Common myeloid progenitor, CD34-positive (primary cell): ENCODE measurements at regions of chr6 and their contacts with region 1.

Region 1: DNA sequence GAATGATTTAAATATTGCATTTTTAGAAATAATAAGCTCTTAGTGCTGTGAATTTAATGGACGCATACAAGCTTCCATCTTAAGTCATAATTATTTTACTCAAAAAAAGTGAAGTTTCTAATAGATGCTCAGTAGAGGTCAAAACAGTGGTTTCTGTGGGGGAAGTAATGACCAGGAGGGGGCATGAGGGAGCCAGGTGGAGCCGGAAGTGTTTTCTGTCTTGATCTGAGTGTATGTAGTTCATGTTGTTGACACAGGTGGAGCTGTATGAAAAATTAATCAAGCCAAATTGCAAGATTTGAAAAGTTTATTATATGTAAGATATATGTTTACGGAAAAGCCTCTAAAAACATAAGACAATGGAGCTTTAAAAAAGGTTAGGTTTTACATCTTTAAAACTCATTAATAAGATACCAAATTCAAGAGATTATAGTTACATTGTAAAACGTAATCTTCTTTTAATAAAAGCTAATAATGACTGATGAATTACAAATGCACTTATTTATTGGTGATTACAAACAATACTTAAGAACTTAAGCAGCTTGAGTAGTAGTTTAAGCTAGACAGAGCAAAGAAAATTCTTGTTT is 68.0 kb downstream of the PLAGL1 start:
- DNase-seq: peak; percentile 78 to 87 (median 86)
- H3K4me3 ChIP-seq: no peak overlapping the region
- H3K27ac ChIP-seq: no peak overlapping the region
- H3K4me1 ChIP-seq: peaks cover 0 to 14% (median 2%) of the 10 kb centered on the region in 4 experiments
- H3K27me3 ChIP-seq: no peaks in the 10 kb centered on the region

Region 2: GRCh38 chr6:143575440-143575839 is 364.7 kb before region 1 on chr6:
- CTCF ChIA-PET with region 1: interaction called, 75 read pairs
- POLR2A ChIA-PET with region 1: no interaction called
- DNase-seq: peak; percentile 82 to 90 (median 89)
- H3K4me3 ChIP-seq: no peak overlapping the region
- H3K27ac ChIP-seq: no peak overlapping the region
- H3K4me1 ChIP-seq: no peaks in the 10 kb centered on the region
- H3K27me3 ChIP-seq: no peaks in the 10 kb centered on the region

Region 3: DNA sequence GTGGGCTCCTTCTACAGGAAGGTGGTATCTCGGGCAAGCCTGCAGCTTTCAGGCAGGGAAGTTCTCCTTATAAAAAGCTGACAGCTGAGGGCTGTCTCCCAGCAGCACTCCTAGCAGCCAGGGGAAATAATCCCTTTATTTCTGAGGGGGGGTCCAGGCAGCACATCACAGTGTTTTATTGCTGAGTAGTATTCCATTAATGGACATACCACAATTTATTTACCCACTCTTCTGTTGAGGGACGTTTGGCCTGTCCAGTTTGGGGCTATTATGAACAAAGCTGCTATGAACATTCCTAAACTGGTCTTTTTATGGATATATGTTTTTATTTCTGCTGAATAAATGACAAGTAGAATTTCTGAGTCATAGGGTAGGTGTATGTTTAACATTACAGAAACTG is 282.3 kb before region 1 on chr6:
- CTCF ChIA-PET with region 1: no interaction called
- POLR2A ChIA-PET with region 1: no interaction called
- DNase-seq: no peak
- H3K4me3 ChIP-seq: no peak overlapping the region
- H3K27ac ChIP-seq: no peak overlapping the region
- H3K4me1 ChIP-seq: no peaks in the 10 kb centered on the region
- H3K27me3 ChIP-seq: no peaks in the 10 kb centered on the region

Region 4: DNA sequence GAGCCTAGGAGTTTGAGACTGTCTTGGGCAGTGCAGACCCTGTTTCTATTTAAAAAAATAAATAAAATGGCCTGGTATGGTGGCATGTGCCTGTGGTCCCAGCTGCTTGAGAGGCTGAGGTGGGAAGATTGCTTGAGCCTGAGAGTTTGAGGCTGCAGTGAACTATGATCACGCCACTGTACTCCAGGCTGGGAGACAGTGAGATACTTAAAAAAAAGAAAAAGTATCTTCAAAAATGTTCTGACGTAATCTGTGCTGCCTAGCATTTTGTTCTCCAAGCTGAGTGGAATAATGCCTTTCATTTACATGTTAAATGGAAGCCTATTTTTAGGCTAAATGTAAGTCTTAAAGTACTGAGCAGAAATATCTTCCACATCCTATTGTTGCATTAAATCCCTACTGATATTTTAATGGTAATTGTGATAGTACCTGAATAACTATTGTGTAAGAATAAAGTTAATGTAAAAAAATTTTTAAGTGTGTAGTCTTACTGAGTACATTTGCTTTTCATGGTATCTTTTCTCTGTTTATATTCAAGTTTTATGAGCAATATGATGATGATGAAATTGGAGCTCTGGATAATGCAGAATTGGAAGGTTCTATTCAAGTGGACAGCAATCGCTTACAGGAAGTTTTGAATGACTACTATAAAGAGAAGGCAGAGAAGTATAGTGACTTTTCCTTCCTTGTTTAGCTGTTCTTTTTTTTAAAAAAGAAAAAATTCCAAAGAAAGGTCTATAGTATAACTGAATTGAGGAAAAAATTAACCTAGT is 80.0 kb before region 1 on chr6:
- CTCF ChIA-PET with region 1: no interaction called
- POLR2A ChIA-PET with region 1: no interaction called
- DNase-seq: no peak
- H3K4me3 ChIP-seq: no peak overlapping the region
- H3K27ac ChIP-seq: no peak overlapping the region
- H3K4me1 ChIP-seq: no peaks in the 10 kb centered on the region
- H3K27me3 ChIP-seq: no peaks in the 10 kb centered on the region

Region 5: GRCh38 chr6:143952947-143953701 is 13.0 kb after region 1 on chr6:
- CTCF ChIA-PET with region 1: interaction called, 19 read pairs
- POLR2A ChIA-PET with region 1: no interaction called
- DNase-seq: no peak
- H3K4me3 ChIP-seq: no peak overlapping the region
- H3K27ac ChIP-seq: no peak overlapping the region
- H3K4me1 ChIP-seq: no peaks in the 10 kb centered on the region
- H3K27me3 ChIP-seq: no peaks in the 10 kb centered on the region

Region 6: DNA sequence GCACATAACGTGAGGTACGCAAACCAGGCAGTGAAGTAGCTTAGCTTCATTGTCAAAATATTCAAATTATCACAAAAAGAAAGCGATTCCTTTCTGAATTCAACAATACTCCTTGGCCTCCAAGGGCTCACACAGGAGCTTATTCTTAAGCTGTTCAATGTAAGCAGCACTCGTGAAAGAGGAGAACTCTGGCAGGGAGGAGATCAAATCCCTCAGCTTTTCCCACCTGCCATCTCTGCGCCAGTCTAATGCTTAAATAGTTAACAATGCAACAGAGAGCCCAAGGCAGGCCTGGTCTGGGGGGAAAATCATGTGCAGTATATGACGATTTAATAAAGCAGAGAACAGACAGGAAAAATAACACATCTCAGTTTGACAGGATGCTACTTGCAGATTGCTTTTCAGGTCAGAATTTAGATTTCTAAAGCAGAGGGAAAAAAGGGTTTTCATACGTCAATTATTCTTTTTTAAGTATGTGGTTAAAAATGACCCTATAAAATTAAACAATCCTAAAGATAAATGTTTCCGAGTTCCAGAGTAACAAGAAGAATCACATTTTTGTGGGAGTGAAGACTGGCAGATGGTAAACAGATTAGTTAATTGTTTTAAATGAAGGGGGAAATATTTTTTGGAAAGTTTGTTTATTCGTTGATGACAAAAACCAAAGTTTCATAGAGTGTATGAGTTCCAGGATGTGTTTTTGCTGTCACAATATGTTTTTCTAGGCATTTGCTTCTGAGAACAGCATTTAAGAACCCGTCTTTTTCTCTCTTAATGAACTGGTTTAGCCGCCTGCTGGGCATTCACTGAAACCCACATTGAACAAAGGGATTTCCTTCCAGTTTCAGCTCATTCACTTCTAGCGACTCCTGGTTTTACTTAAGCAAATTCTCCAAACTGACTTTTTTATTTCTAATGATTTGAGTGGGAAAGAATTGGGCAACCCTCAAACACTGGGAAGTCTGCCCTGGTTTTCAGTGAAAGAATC is 22.1 kb after region 1 on chr6:
- CTCF ChIA-PET with region 1: interaction called, 16 read pairs
- POLR2A ChIA-PET with region 1: no interaction called
- DNase-seq: no peak
- H3K4me3 ChIP-seq: no peak overlapping the region
- H3K27ac ChIP-seq: no peak overlapping the region
- H3K4me1 ChIP-seq: peaks cover 0 to 32% (median 11%) of the 10 kb centered on the region in 4 experiments
- H3K27me3 ChIP-seq: no peaks in the 10 kb centered on the region

Region 7: DNA sequence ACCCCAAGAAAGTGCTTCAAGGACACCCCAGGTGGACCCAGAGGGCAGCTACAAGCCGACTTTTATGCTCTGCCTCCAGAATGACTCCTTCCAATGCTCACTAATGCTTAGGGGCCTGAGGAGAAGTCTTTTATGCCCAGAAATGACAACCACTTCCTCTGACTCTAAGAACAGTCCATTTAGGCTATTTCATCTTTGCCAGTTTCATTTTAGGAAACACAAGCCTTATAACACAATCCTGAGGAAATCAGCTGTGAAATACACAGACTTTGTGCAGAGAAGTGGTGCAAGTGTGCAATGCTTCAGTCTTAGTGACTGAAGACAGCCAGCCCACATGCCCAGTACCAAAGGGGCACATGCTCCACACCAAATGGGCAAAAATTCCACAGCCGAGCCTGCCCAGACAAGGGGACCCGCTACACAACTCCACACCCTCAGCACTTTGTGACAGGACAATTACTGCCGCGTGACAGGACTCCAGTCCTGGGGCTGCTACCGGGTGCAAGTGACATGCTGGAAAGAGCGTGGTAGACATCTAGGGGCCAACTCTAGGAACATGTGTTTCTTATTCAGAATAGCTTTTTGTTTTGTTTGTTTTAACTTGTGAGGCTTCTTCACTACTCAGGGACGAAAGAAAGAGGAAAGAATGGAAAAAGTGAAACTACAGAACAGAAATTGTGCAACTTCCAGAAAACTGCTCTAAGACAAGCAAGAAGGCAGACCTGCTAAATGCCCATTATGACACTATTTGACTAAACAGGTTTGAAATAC is 96.1 kb after region 1 on chr6:
- CTCF ChIA-PET with region 1: interaction called, 12 read pairs
- POLR2A ChIA-PET with region 1: no interaction called
- DNase-seq: peak; percentile 49 to 77 (median 72)
- H3K4me3 ChIP-seq: peak overlapping the region in 6 of 7 experiments; percentile 24 to 75 (median 64)
- H3K27ac ChIP-seq: peak overlapping the region; percentile 37 to 71
- H3K4me1 ChIP-seq: peaks cover 19 to 40% (median 35%) of the 10 kb centered on the region in 4 experiments
- H3K27me3 ChIP-seq: no peaks in the 10 kb centered on the region

Region 8: GRCh38 chr6:144090384-144090783 is 150.3 kb after region 1 on chr6:
- CTCF ChIA-PET with region 1: interaction called, 11 read pairs
- POLR2A ChIA-PET with region 1: no interaction called
- DNase-seq: peak in 2 of 3 donors; percentile 31
- H3K4me3 ChIP-seq: no peak overlapping the region
- H3K27ac ChIP-seq: no peak overlapping the region
- H3K4me1 ChIP-seq: peaks cover 8 to 24% (median 20%) of the 10 kb centered on the region in 4 experiments
- H3K27me3 ChIP-seq: no peaks in the 10 kb centered on the region